Naive thymus-derived CD8-positive, alpha-beta T cell (primary cell): ENCODE measurements at regions of chr22 and their contacts with region 1.

Region 1: GRCh38 chr22:31107178-31107893 is at the start of gene SELENOM:
- DNase-seq: peak; percentile 77 to 92 (median 84)
- ATAC-seq: peak; percentile 89 to 90
- H3K4me3 Mint-ChIP-seq: peak within 1 kb of the TSS; percentile 90 to 97 (median 95)
- H3K27ac Mint-ChIP-seq: peak within 1 kb of the TSS; percentile 86 to 97 (median 94)
- H3K4me1 Mint-ChIP-seq: peaks cover 18 to 27% (median 21%) of the 10 kb centered on the region in 4 donors
- H3K27me3 Mint-ChIP-seq: no peaks in the 10 kb centered on the region
- polyA plus RNA-seq, gene SELENOM: 114 to 142 (median 134) TPM

Region 2: DNA sequence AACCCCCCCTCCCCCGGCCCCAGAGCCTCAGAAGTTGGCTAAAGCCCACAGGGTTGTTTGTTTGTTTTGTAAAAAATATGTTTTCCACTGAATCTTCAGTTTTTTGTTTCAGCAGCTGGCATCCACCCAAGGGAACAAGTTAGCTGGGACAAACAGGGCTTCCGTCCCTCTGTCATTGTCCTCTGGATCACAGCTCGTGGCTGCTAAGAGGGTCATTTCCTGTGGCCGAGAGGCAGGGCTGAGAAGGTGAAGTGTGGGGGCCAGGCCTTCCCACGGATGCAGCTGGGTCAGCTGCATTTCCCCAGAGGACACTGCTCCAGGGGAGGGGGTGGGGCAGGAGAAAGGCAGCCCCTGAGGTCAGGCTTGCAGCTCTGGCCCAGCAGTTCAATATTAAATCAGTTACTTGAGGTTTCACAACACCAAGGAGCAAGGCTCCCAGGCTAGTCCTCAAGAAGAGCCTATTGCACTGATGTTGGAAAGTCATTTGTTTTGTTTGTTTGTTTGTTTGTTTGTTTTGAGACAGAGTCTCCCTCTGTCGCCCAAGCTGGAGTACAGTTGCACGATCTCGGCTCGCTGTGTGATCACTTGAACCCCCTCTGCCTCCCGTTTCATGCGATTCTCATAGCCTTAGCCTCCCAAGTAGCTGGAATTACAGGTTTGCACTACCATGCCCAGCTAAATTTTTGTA is 60.7 kb before region 1 on chr22:
- POLR2A ChIA-PET with region 1: no interaction called
- DNase-seq: no peak
- ATAC-seq: no peak
- H3K4me3 Mint-ChIP-seq: no peak overlapping the region
- H3K27ac Mint-ChIP-seq: no peak overlapping the region
- H3K4me1 Mint-ChIP-seq: peaks cover 0 to 4% (median 0%) of the 10 kb centered on the region in 4 donors
- H3K27me3 Mint-ChIP-seq: peaks cover 0 to 11% (median 3%) of the 10 kb centered on the region in 5 donors

Region 3: GRCh38 chr22:31068970-31069369 is 38.4 kb before region 1 on chr22:
- POLR2A ChIA-PET with region 1: no interaction called
- DNase-seq: no peak
- ATAC-seq: no peak
- H3K4me3 Mint-ChIP-seq: no peak overlapping the region
- H3K27ac Mint-ChIP-seq: no peak overlapping the region
- H3K4me1 Mint-ChIP-seq: peaks cover 0 to 1% (median 0%) of the 10 kb centered on the region in 4 donors
- H3K27me3 Mint-ChIP-seq: no peaks in the 10 kb centered on the region

Region 4: DNA sequence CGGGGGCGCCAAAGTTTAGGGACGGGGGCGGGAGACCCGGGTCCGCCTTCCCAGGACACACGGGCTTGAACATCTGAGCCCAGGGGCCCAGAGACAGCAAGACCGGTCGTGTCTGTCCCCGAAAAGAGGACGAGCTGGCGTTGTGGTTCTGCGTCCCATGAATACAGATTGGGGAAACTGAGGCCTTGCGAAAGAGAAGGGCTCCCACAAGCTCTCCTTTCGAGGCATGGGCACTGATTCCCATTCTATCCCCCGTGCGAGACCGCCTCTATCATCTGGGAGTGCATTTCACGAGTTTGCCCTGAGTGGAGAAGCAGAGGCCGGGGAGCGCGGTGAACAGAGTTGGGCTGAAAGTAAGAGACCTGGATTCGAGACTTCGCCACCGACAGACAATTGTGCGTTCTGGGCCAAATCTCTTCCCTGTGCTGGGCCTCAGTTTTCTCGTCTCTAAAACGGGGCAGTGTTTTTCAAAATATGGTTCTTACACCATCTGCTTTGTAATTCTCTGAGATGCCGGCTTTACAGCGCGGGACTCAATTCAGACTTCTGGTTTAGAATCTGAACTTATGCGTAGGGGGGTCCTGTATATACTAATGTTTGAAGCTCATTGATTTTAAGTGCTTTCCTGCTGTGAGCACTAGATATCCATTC is 53.1 kb after region 1 on chr22:
- POLR2A ChIA-PET with region 1: interaction called, 11 read pairs
- DNase-seq: peak in 3 of 10 donors; percentile 3 to 27 (median 26)
- ATAC-seq: peak; percentile 50 to 64
- H3K4me3 Mint-ChIP-seq: peak overlapping the region; percentile 97 to 100 (median 100)
- H3K27ac Mint-ChIP-seq: peak overlapping the region; percentile 92 to 100 (median 99)
- H3K4me1 Mint-ChIP-seq: peaks cover 15 to 41% (median 36%) of the 10 kb centered on the region in 4 donors
- H3K27me3 Mint-ChIP-seq: peaks cover 0 to 2% (median 0%) of the 10 kb centered on the region in 5 donors